Activated CD8-positive, alpha-beta memory T cell treated with anti-CD3 and anti-CD28 coated beads, Interleukin-2, amount 10 ng/mL, durations not matched to agents 7 days and 5 days (primary cell): ENCODE measurements at regions of chr1 and their contacts with region 1.

Region 1: GRCh38 chr1:110645821-110646735 is 28.7 kb downstream of the KCNA3 start:
- DNase-seq: no peak
- ATAC-seq: no peak
- H3K4me3 Mint-ChIP-seq: no peak overlapping the region
- H3K27ac Mint-ChIP-seq: no peak overlapping the region
- H3K4me1 Mint-ChIP-seq: peaks cover 45% of the 10 kb centered on the region
- H3K27me3 Mint-ChIP-seq: no peaks in the 10 kb centered on the region

Region 2: GRCh38 chr1:110630839-110631663 is 15.0 kb before region 1 on chr1:
- CTCF ChIA-PET with region 1: interaction called, 90 read pairs
- DNase-seq: peak; percentile 95
- ATAC-seq: peak; percentile 84
- H3K4me3 Mint-ChIP-seq: no peak overlapping the region
- H3K27ac Mint-ChIP-seq: no peak overlapping the region
- H3K4me1 Mint-ChIP-seq: peaks cover 33% of the 10 kb centered on the region
- H3K27me3 Mint-ChIP-seq: no peaks in the 10 kb centered on the region

Region 3: GRCh38 chr1:110657351-110657750 is 11.3 kb after region 1 on chr1:
- CTCF ChIA-PET with region 1: interaction called, 17 read pairs
- DNase-seq: no peak
- ATAC-seq: no peak
- H3K4me3 Mint-ChIP-seq: no peak overlapping the region
- H3K27ac Mint-ChIP-seq: no peak overlapping the region
- H3K4me1 Mint-ChIP-seq: peaks cover 45% of the 10 kb centered on the region
- H3K27me3 Mint-ChIP-seq: no peaks in the 10 kb centered on the region

Region 4: GRCh38 chr1:110663241-110663640 is 17.2 kb after region 1 on chr1:
- CTCF ChIA-PET with region 1: interaction called, 17 read pairs
- DNase-seq: no peak
- ATAC-seq: no peak
- H3K4me3 Mint-ChIP-seq: no peak overlapping the region
- H3K27ac Mint-ChIP-seq: no peak overlapping the region
- H3K4me1 Mint-ChIP-seq: peaks cover 36% of the 10 kb centered on the region
- H3K27me3 Mint-ChIP-seq: no peaks in the 10 kb centered on the region

Region 5: DNA sequence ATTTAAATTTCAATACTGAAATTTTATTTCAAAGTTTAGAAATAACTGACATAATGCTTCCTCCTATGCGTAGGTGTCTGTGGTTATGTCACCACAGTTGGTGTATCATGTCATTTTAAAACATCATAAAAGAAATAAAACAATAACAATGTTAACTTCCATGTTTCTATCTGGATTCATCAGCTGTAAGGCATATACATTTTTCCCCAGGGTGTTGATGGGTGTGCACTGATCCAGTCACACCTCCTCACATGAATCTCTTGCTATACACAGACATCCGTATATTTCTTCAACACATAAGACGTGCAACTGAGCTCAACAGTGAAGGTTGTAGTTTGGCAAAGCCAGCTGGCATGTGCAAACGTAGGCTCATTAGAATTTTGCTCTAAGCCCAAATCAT is 22.5 kb after region 1 on chr1:
- CTCF ChIA-PET with region 1: interaction called, 39 read pairs
- DNase-seq: no peak
- ATAC-seq: peak; percentile 40
- H3K4me3 Mint-ChIP-seq: peak overlapping the region; percentile 77
- H3K27ac Mint-ChIP-seq: peak overlapping the region; percentile 83
- H3K4me1 Mint-ChIP-seq: peaks cover 16% of the 10 kb centered on the region
- H3K27me3 Mint-ChIP-seq: no peaks in the 10 kb centered on the region

Region 6: GRCh38 chr1:110674337-110675059 is 28.4 kb after region 1 on chr1 and contains the start of gene KCNA3:
- CTCF ChIA-PET with region 1: interaction called, 39 read pairs
- DNase-seq: peak; percentile 83
- ATAC-seq: peak; percentile 43
- H3K4me3 Mint-ChIP-seq: peak within 1 kb of the TSS; percentile 100
- H3K27ac Mint-ChIP-seq: peak within 1 kb of the TSS; percentile 96
- H3K4me1 Mint-ChIP-seq: peaks cover 14% of the 10 kb centered on the region
- H3K27me3 Mint-ChIP-seq: no peaks in the 10 kb centered on the region
- total RNA-seq, gene KCNA3: 59.8 to 95.2 TPM